Activated T-helper 1 cell treated with anti-CD3 and anti-CD28 coated beads, Interleukin-12 subunit alpha, Interleukin-12 subunit beta, Interleukin-2, Interleukin-4 antibody, amounts not matched to agents 30 ng/mL and 10 ng/mL and 1 ng/mL, durations not matched to agents 14 hours and 24 hours and 36 hours (primary cell): ENCODE measurements at regions of chr14 and their contacts with region 1.

Region 1: DNA sequence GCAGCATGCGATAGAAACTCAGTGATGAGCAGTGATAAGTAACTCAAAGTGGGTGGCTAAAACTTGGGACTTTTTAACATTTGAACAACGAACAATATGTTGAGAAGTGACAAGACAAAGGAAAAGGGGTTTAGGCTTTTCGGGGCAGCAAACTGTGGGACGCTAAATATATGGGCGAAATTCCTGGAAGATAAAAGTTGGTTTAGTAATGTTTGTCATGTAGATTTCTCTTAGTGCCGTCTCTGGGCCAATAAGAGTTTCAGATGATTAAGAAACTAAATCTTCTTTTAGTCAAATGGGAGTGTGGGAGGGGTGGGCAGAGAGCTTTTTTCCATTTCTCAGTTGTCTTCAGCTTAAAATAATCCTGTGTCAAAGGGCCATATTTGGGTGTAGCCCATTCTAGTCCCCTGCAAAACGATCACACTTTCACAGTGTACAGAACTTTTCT is 41.7 kb upstream of the FUT8 start:
- DNase-seq: no peak
- H3K4me3 Mint-ChIP-seq: peak overlapping the region; percentile 4
- H3K27ac Mint-ChIP-seq: peak overlapping the region; percentile 89
- H3K4me1 Mint-ChIP-seq: peaks cover 76% of the 10 kb centered on the region
- H3K27me3 Mint-ChIP-seq: no peaks in the 10 kb centered on the region

Region 2: GRCh38 chr14:64566651-64567122 is 804.1 kb before region 1 on chr14:
- intact Hi-C with region 1: no loop called
- DNase-seq: no peak
- H3K4me3 Mint-ChIP-seq: no peak overlapping the region
- H3K27ac Mint-ChIP-seq: no peak overlapping the region
- H3K4me1 Mint-ChIP-seq: peaks cover 2% of the 10 kb centered on the region
- H3K27me3 Mint-ChIP-seq: peaks cover 22% of the 10 kb centered on the region

Region 3: GRCh38 chr14:65336191-65336591 is 34.6 kb before region 1 on chr14:
- intact Hi-C with region 1: loop called (anchors 1 kb)
- DNase-seq: peak; percentile 63
- H3K4me3 Mint-ChIP-seq: peak overlapping the region; percentile 91
- H3K27ac Mint-ChIP-seq: peak overlapping the region; percentile 96
- H3K4me1 Mint-ChIP-seq: peaks cover 59% of the 10 kb centered on the region
- H3K27me3 Mint-ChIP-seq: no peaks in the 10 kb centered on the region

Region 4: GRCh38 chr14:65356327-65356852 is 14.4 kb before region 1 on chr14:
- intact Hi-C with region 1: loop called (anchors 1 kb)
- DNase-seq: no peak
- H3K4me3 Mint-ChIP-seq: peak overlapping the region; percentile 12
- H3K27ac Mint-ChIP-seq: peak overlapping the region; percentile 87
- H3K4me1 Mint-ChIP-seq: peaks cover 87% of the 10 kb centered on the region
- H3K27me3 Mint-ChIP-seq: no peaks in the 10 kb centered on the region

Region 5: GRCh38 chr14:65396082-65396910 is 25.5 kb after region 1 on chr14:
- intact Hi-C with region 1: loop called (anchors 1 kb)
- DNase-seq: no peak
- H3K4me3 Mint-ChIP-seq: peak overlapping the region; percentile 48
- H3K27ac Mint-ChIP-seq: peak overlapping the region; percentile 76
- H3K4me1 Mint-ChIP-seq: peaks cover 40% of the 10 kb centered on the region
- H3K27me3 Mint-ChIP-seq: no peaks in the 10 kb centered on the region

Region 6: GRCh38 chr14:65550779-65551643 is 180.2 kb after region 1 on chr14:
- intact Hi-C with region 1: no loop called
- DNase-seq: no peak
- H3K4me3 Mint-ChIP-seq: no peak overlapping the region
- H3K27ac Mint-ChIP-seq: peak overlapping the region; percentile 0
- H3K4me1 Mint-ChIP-seq: peaks cover 14% of the 10 kb centered on the region
- H3K27me3 Mint-ChIP-seq: no peaks in the 10 kb centered on the region